HCT116 (cell line): ENCODE measurements at regions of chr6 and their contacts with region 1.

Region 1: DNA sequence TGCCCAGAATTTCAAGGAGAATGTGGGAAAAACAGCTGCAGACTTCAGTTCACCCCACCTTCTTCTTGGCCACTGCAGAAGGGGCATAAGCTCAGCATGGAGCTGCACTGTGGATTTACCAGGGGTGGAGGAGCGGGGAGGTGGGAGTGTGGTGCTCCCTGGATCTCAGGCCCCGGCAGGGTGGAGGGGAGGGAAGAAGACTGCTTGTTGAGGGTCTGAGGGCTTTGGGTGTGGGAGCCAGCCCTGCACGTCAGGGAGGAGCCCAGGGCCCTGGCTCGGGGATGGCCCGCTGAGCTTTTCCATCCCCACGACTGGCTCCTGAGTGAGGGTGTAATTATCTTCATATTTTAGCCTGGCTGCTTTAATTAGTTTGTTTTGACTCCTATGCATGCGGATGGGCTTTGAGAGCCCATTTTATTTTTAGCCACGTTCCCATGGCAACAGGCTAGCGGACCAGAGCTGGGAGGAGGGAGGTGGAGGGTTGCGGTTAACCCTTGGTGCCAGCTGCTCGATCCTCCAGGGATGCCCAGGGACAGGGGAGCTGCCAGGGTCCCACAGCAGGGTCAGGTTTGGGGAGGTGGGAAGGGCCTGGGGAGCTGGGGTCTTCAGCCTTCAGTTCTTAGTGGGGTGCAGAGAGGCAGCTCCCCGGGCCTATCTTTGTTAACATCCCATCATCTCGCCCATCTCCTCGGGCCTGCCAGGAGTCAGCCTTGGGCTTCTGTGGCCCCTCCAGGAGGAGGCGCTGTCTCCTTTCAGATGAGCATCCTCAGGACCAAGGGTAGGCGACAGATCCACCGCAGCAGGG is 68.2 kb downstream of the RAB44 start:
- DNase-seq: peak; percentile 67
- ATAC-seq: peak; percentile 98
- H3K4me3 ChIP-seq: no peak overlapping the region
- H3K27ac ChIP-seq: no peak overlapping the region
- H3K4me1 ChIP-seq: peaks cover 0 to 10% of the 10 kb centered on the region in 2 experiments; a peak in 2 of 4 replicates
- H3K27me3 ChIP-seq: no peaks in the 10 kb centered on the region
- CTCF ChIP-seq: peak; percentile 95 to 97 (median 96)
- POLR2A ChIP-seq: no peak
- RAD21 ChIP-seq: peak; percentile 97

Region 2: GRCh38 chr6:36735110-36736071 is 30.4 kb before region 1 on chr6:
- CTCF ChIA-PET with region 1: no interaction called
- POLR2A ChIA-PET with region 1: no interaction called
- RAD21 ChIA-PET with region 1: no interaction called
- intact Hi-C with region 1: no loop called
- DNase-seq: no peak
- ATAC-seq: no peak
- H3K4me3 ChIP-seq: no peak overlapping the region
- H3K27ac ChIP-seq: no peak overlapping the region
- H3K4me1 ChIP-seq: no peaks in the 10 kb centered on the region
- H3K27me3 ChIP-seq: no peaks in the 10 kb centered on the region
- CTCF ChIP-seq: no peak
- POLR2A ChIP-seq: no peak
- RAD21 ChIP-seq: no peak

Region 3: DNA sequence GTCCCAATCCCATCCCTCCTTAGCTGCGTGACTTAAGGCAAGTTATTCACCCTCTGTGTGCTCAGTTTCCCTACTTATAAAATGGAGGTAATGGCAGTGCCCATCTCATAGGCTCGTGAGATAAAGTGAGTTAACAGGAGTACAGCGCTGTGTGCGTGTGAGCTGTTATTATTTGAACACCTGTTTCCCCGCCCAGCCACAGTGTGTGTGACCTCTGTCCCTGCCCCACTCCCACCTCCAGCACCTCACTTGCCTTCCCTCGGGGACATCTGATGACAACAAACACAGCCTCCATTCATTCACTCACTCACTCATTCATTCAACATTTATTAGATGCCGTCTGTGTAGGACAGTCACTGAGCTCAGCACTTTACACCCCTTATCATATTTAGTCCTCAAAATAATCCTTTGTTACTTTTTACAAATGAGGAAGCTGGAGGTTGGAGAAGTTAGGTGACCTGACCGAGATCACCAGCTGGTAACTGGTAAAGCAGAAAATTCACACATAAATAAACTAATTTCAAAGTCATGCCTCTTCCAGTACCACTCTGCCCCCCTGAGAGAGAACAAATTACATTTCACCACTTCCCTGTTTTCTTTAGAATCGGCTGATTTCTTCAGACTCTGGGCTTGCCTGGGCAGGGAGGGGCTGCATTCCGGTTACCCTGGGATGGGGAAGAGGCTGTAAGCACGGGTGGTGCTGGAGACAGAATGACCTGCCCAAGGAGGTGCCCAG is 14.8 kb after region 1 on chr6:
- CTCF ChIA-PET with region 1: interaction called, 29 read pairs
- POLR2A ChIA-PET with region 1: no interaction called
- RAD21 ChIA-PET with region 1: interaction called, 3 to 5 read pairs
- intact Hi-C with region 1: no loop called
- DNase-seq: no peak
- ATAC-seq: no peak
- H3K4me3 ChIP-seq: no peak overlapping the region
- H3K27ac ChIP-seq: no peak overlapping the region
- H3K4me1 ChIP-seq: no peaks in the 10 kb centered on the region
- H3K27me3 ChIP-seq: peaks cover 6% of the 10 kb centered on the region; the same call in 1 of the 2 replicates
- CTCF ChIP-seq: no peak
- POLR2A ChIP-seq: no peak
- RAD21 ChIP-seq: no peak

Region 4: GRCh38 chr6:36851149-36851614 is 85.4 kb after region 1 on chr6:
- CTCF ChIA-PET with region 1: interaction called, 32 read pairs
- POLR2A ChIA-PET with region 1: no interaction called
- RAD21 ChIA-PET with region 1: no interaction called
- intact Hi-C with region 1: loop called (anchors 2 kb)
- DNase-seq: peak; percentile 37
- ATAC-seq: peak; percentile 44; the same call in 1 of the 2 replicates
- H3K4me3 ChIP-seq: no peak overlapping the region
- H3K27ac ChIP-seq: no peak overlapping the region
- H3K4me1 ChIP-seq: no peaks in the 10 kb centered on the region; a peak in 1 of 4 replicates
- H3K27me3 ChIP-seq: no peaks in the 10 kb centered on the region
- CTCF ChIP-seq: peak; percentile 62 to 88 (median 76); a peak in 5 of 6 replicates
- POLR2A ChIP-seq: no peak
- RAD21 ChIP-seq: peak; percentile 71

Region 5: DNA sequence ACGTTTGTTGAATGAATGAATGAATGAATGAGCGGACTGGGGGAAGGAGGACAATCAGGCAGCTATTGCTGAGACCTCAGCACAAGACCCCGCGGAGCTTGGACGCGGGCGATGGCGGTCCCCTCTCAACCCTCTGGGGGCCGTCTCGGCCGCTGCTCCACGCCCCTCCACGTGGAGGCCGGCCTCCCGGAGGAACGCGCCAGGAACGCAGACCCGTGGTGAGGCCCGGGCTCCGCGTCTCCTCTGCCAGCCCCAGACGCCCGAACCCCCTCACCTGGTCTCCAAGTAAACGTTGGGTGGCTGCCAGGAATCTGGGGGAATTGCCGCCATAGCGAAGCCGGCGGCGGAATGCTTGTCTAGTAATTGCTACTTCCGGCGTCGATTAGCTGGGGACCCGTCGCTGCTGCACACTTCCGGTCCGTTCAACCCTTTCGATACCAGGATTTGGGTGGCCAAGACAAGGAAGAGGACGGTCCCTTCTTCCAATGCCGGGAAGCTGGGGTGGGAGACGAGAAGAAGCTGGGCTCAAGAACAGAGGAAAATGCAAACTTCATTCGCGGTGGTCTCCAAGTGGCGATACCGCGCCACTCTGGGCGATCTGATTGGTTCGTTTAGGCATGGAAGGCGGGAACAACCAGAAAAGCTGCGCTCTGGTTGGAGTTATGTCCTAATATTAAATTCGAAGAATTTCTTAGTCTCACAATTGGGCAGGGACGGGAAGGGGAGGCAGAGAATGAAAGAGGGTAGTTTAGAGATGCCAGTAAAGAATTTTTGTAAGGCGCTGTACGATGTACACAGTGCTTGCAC is 108.8 kb after region 1 on chr6 and contains the start of gene PPIL1:
- CTCF ChIA-PET with region 1: interaction called, 14 read pairs
- POLR2A ChIA-PET with region 1: no interaction called
- RAD21 ChIA-PET with region 1: no interaction called
- intact Hi-C with region 1: loop called (anchors 5 kb)
- DNase-seq: peak; percentile 88
- ATAC-seq: peak; percentile 91
- H3K4me3 ChIP-seq: peak within 1 kb of the TSS; percentile 68 to 84
- H3K27ac ChIP-seq: peak within 1 kb of the TSS; percentile 93
- H3K4me1 ChIP-seq: peaks cover 8 to 17% of the 10 kb centered on the region in 2 experiments; a peak in 3 of 4 replicates
- H3K27me3 ChIP-seq: no peaks in the 10 kb centered on the region
- CTCF ChIP-seq: no peak
- POLR2A ChIP-seq: peak; percentile 30
- RAD21 ChIP-seq: no peak
- total RNA-seq, gene PPIL1: 42.0 TPM

Region 6: GRCh38 chr6:36885461-36886401 is 119.9 kb after region 1 on chr6 and contains the start of gene C6orf89:
- CTCF ChIA-PET with region 1: interaction called, 10 read pairs
- POLR2A ChIA-PET with region 1: no interaction called
- RAD21 ChIA-PET with region 1: no interaction called
- intact Hi-C with region 1: no loop called
- DNase-seq: peak; percentile 94
- ATAC-seq: peak; percentile 100
- H3K4me3 ChIP-seq: peak within 1 kb of the TSS; percentile 81 to 88
- H3K27ac ChIP-seq: peak within 1 kb of the TSS; percentile 65
- H3K4me1 ChIP-seq: peaks cover 8 to 18% of the 10 kb centered on the region in 2 experiments; a peak in 3 of 4 replicates
- H3K27me3 ChIP-seq: no peaks in the 10 kb centered on the region
- CTCF ChIP-seq: peak; percentile 80 to 87 (median 87)
- POLR2A ChIP-seq: no peak
- RAD21 ChIP-seq: peak; percentile 73
- total RNA-seq, gene C6orf89: 32.9 TPM

Region 7: GRCh38 chr6:37169496-37170272 is 403.9 kb after region 1 on chr6 and contains the start of gene PIM1:
- CTCF ChIA-PET with region 1: no interaction called
- POLR2A ChIA-PET with region 1: no interaction called
- RAD21 ChIA-PET with region 1: no interaction called
- intact Hi-C with region 1: loop called (anchors 1 kb)
- DNase-seq: peak; percentile 87
- ATAC-seq: peak; percentile 87
- H3K4me3 ChIP-seq: peak within 1 kb of the TSS; percentile 77 to 81
- H3K27ac ChIP-seq: peak within 1 kb of the TSS; percentile 73; the same call in 1 of the 2 replicates
- H3K4me1 ChIP-seq: peaks cover 19 to 34% of the 10 kb centered on the region in 2 experiments
- H3K27me3 ChIP-seq: no peaks in the 10 kb centered on the region
- CTCF ChIP-seq: no peak
- POLR2A ChIP-seq: peak; percentile 25
- RAD21 ChIP-seq: no peak
- total RNA-seq, gene PIM1: 26.2 TPM

Region 8: DNA sequence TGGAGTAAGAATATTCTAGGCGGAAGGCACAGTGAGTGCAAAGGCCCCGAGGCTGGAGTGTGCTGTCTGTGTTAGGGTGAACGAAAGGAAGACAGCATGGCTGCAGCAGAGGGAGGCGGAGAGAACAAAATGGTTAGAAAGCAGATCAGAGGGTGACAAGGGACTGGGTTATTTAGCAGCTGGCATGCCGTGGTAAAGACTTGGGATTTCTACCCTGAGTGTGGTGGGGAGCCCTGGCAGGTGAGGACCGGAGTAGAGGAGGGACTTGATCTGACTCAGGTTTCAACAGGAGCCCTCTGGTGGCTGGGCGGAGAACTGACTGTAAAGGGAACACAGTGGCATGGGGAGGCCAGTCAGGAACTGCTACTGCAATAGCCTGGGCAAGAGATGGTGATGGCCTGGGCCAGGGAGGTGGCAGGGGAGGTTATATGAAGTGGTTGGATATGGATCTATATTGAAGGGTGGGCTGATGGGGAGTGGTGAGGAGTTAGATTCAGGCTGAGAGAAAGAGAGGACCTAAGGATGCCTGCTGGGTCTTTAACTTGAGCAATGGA is 442.2 kb after region 1 on chr6:
- CTCF ChIA-PET with region 1: interaction called, 23 read pairs
- POLR2A ChIA-PET with region 1: no interaction called
- RAD21 ChIA-PET with region 1: no interaction called
- intact Hi-C with region 1: loop called (anchors 1 kb)
- DNase-seq: peak; percentile 77
- ATAC-seq: peak; percentile 94
- H3K4me3 ChIP-seq: no peak overlapping the region
- H3K27ac ChIP-seq: no peak overlapping the region
- H3K4me1 ChIP-seq: peaks cover 13 to 36% of the 10 kb centered on the region in 2 experiments
- H3K27me3 ChIP-seq: no peaks in the 10 kb centered on the region
- CTCF ChIP-seq: peak; percentile 92 to 95 (median 94)
- POLR2A ChIP-seq: no peak
- RAD21 ChIP-seq: peak; percentile 77